CD4-positive, alpha-beta memory T cell (primary cell): ENCODE measurements at regions of chr22 and their contacts with region 1.

Region 1: DNA sequence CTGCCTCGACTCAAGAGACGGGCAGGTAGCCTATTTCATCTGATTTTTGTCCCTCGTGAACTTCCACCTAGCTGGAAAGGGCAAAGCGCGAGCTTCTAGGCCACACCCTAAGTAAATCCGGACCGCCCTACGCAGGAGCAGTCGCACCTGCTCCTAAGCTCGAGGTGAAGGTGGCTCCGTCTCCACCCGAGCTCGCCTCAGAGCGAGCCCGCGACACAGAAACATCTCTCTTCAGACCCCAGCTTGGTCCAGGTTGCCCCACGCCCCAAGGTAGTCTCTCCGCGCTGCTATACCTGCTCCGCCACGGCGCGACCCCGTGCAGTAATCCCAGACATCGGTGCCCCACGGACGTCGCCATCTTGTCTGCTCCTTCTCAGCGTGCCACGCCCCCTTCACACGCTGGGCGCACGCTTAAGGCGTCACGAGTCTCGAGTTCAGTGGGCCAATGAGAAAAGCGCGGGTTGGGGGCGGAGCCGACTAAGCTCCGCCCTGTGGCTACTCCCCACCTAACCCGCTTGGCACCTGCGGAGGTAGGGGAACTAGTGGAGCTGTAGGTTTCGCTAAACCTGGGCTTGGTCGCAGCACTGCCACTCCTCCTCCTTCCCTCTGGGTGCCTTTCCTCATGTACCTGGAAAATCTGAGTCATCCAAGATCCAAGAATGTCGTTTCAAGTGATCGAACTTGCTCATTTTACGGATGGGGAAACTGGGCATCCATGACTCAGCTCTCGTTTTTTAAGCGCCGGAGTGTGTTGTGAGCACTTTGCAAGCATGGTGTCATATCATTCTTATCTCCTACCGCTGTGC is at the start of gene PISD:
- DNase-seq: peak; percentile 96 to 97 (median 97)
- H3K4me3 ChIP-seq: peak within 1 kb of the TSS; percentile 78 to 96
- H3K4me3 Mint-ChIP-seq: peak within 1 kb of the TSS; percentile 97 to 100 (median 100)
- H3K27ac ChIP-seq: peak within 1 kb of the TSS; percentile 73
- H3K27ac Mint-ChIP-seq: peak within 1 kb of the TSS; percentile 95 to 100 (median 98)
- H3K4me1 ChIP-seq: peaks cover 21% of the 10 kb centered on the region
- H3K4me1 Mint-ChIP-seq: peaks cover 26 to 46% (median 33%) of the 10 kb centered on the region in 4 donors
- H3K27me3 ChIP-seq: no peaks in the 10 kb centered on the region
- H3K27me3 Mint-ChIP-seq: peaks cover 0 to 2% of the 10 kb centered on the region in 2 donors
- total RNA-seq, gene PISD: 34.3 to 35.4 TPM

Region 2: DNA sequence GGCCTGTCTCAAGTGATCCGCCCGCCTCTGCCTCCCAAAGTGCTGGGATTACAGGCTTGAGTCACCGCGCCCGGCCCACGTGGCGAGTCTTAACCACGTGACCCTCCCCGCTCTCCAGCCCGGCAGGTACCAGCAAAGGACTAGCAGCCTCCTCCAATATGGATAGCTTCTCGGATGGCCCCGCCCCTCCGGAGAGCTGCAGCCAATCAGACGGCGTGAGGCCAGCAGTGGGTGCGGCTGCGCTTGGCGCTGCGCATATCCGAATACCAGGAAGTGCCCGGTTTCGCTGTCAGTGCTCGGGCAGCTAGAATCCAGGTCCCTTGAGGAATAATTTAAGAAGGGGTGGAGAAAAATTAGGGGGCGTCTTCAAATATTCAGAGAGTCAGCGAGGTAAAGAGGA is 14.6 kb after region 1 on chr22:
- CTCF ChIA-PET with region 1: interaction called, 78 read pairs
- POLR2A ChIA-PET with region 1: interaction called, 70 read pairs
- intact Hi-C with region 1: loop called (anchors 1 kb)
- DNase-seq: peak; percentile 89 to 94 (median 89)
- H3K4me3 ChIP-seq: peak overlapping the region; percentile 65 to 80
- H3K4me3 Mint-ChIP-seq: peak overlapping the region; percentile 92 to 100 (median 96)
- H3K27ac ChIP-seq: peak overlapping the region; percentile 76
- H3K27ac Mint-ChIP-seq: peak overlapping the region; percentile 91 to 100 (median 97)
- H3K4me1 ChIP-seq: peaks cover 3% of the 10 kb centered on the region
- H3K4me1 Mint-ChIP-seq: peaks cover 10 to 13% (median 12%) of the 10 kb centered on the region in 4 donors
- H3K27me3 ChIP-seq: no peaks in the 10 kb centered on the region
- H3K27me3 Mint-ChIP-seq: no peaks in the 10 kb centered on the region

Region 3: GRCh38 chr22:31749636-31750364 is 87.7 kb after region 1 on chr22 and contains the start of gene PRR14L:
- CTCF ChIA-PET with region 1: interaction called, 17 read pairs
- POLR2A ChIA-PET with region 1: interaction called, 27 read pairs
- intact Hi-C with region 1: loop called (anchors 1 kb)
- DNase-seq: peak; percentile 96 to 99 (median 96)
- H3K4me3 ChIP-seq: peak within 1 kb of the TSS; percentile 24 to 87
- H3K4me3 Mint-ChIP-seq: peak within 1 kb of the TSS; percentile 92 to 100 (median 96)
- H3K27ac ChIP-seq: peak within 1 kb of the TSS; percentile 85
- H3K27ac Mint-ChIP-seq: peak within 1 kb of the TSS; percentile 93 to 97 (median 96)
- H3K4me1 ChIP-seq: peaks cover 48% of the 10 kb centered on the region
- H3K4me1 Mint-ChIP-seq: peaks cover 33 to 70% (median 50%) of the 10 kb centered on the region in 4 donors
- H3K27me3 ChIP-seq: no peaks in the 10 kb centered on the region
- H3K27me3 Mint-ChIP-seq: no peaks in the 10 kb centered on the region
- total RNA-seq, gene PRR14L: 70.7 to 72.6 TPM

Region 4: DNA sequence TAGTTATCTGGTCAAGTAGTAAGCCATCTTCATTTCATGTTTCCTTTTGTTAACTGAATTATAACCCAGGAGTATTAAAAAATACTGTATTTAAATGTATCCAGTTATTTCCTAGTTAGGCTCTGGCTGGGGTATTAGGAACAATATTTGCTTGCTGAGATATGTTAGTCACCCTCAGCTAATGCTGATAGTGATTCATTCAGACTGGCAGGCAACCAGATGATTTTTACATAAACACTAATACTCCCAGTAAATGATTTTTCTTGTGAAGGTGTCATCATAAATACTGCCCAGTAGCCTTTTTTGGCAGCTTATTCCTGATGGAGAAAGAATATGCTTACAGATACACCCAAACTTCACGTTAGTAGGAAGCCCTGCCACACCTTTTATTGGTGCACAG is 290.4 kb after region 1 on chr22:
- CTCF ChIA-PET with region 1: interaction called, 65 read pairs
- POLR2A ChIA-PET with region 1: interaction called, 23 read pairs
- intact Hi-C with region 1: loop called (anchors 1 kb)
- DNase-seq: no peak
- H3K4me3 ChIP-seq: no peak overlapping the region
- H3K4me3 Mint-ChIP-seq: peak overlapping the region in 4 of 8 donors; percentile 52 to 67 (median 62)
- H3K27ac ChIP-seq: peak overlapping the region; percentile 61
- H3K27ac Mint-ChIP-seq: peak overlapping the region; percentile 71 to 97 (median 89)
- H3K4me1 ChIP-seq: peaks cover 79% of the 10 kb centered on the region
- H3K4me1 Mint-ChIP-seq: peaks cover 57 to 75% (median 66%) of the 10 kb centered on the region in 4 donors
- H3K27me3 ChIP-seq: no peaks in the 10 kb centered on the region
- H3K27me3 Mint-ChIP-seq: no peaks in the 10 kb centered on the region

Region 5: DNA sequence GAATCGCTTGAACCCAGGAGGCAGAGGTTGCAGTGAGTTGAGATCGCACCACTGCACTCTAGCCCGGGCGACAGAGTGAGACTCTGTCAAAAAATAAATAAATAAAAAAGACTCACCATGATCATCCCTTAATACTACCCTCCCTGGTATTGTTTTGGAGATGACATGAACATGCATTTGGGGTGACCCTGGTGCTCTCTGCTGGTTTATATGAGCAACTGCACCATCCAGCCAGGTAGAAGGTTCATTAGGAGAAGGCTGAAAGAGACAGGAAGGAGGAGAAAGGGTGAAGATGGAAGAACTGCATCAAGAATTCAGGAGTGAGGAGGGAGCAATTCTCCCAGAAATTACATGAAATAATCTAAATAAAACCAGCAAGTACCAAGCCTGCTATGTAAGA is 418.9 kb after region 1 on chr22:
- CTCF ChIA-PET with region 1: interaction called, 11 read pairs
- POLR2A ChIA-PET with region 1: no interaction called
- intact Hi-C with region 1: loop called (anchors 2 kb)
- DNase-seq: peak in 4 of 5 donors; percentile 29 to 46 (median 33)
- H3K4me3 ChIP-seq: no peak overlapping the region
- H3K4me3 Mint-ChIP-seq: no peak overlapping the region
- H3K27ac ChIP-seq: no peak overlapping the region
- H3K27ac Mint-ChIP-seq: no peak overlapping the region
- H3K4me1 ChIP-seq: no peaks in the 10 kb centered on the region
- H3K4me1 Mint-ChIP-seq: no peaks in the 10 kb centered on the region
- H3K27me3 ChIP-seq: no peaks in the 10 kb centered on the region
- H3K27me3 Mint-ChIP-seq: peaks cover 5 to 8% of the 10 kb centered on the region in 2 donors